IMR-90 (cell line): ENCODE measurements at regions of chr9 and their contacts with region 1.

Region 1: GRCh38 chr9:37953775-37954437 is 50.0 kb upstream of the SLC25A51 start:
- DNase-seq: peak; percentile 100
- ATAC-seq: peak; percentile 74
- H3K4me3 ChIP-seq: no peak overlapping the region
- H3K27ac ChIP-seq: peak overlapping the region; percentile 87
- H3K4me1 ChIP-seq: peaks cover 28% of the 10 kb centered on the region
- H3K27me3 ChIP-seq: no peaks in the 10 kb centered on the region
- CTCF ChIP-seq: no peak
- POLR2A ChIP-seq: peak; percentile 65; the same call in 1 of the 2 replicates
- RAD21 ChIP-seq: 0 out of 2 replicates have a peak, but pooled peaks have one; percentile 16

Region 2: GRCh38 chr9:37994639-37995347 is 40.9 kb after region 1 on chr9:
- CTCF ChIA-PET with region 1: no interaction called
- POLR2A ChIA-PET with region 1: no interaction called
- dilution Hi-C with region 1: no loop called
- in situ Hi-C with region 1: no loop called
- intact Hi-C with region 1: loop called (anchors 1 kb)
- DNase-seq: peak; percentile 88
- ATAC-seq: peak; percentile 68
- H3K4me3 ChIP-seq: peak overlapping the region; percentile 18; the same call in 1 of the 2 replicates
- H3K27ac ChIP-seq: peak overlapping the region; percentile 80
- H3K4me1 ChIP-seq: peaks cover 43% of the 10 kb centered on the region
- H3K27me3 ChIP-seq: no peaks in the 10 kb centered on the region
- CTCF ChIP-seq: no peak
- POLR2A ChIP-seq: no peak
- RAD21 ChIP-seq: peak; percentile 18

Region 3: DNA sequence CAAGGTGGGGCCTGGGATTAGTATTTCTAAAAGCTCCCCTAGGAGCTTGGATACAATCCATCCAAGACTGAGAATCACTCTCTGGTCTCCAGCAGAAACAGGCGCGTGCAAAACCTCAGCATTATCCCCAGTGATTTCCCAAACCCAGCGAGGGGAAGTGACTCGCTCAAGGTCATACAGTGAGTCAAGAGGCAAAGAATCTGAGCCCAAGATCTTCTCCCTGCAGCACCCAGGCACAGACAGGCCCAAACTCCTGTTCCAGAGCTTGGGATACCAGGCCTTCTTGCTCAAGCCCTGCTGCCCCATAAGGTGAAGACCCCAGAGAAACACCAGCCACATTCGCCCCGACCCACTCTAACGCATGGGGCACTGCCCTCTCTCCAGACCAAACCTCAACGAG is 82.0 kb after region 1 on chr9:
- CTCF ChIA-PET with region 1: no interaction called
- POLR2A ChIA-PET with region 1: no interaction called
- dilution Hi-C with region 1: no loop called
- in situ Hi-C with region 1: no loop called
- intact Hi-C with region 1: loop called (anchors 5 kb)
- DNase-seq: peak; percentile 90
- ATAC-seq: peak; percentile 65
- H3K4me3 ChIP-seq: no peak overlapping the region
- H3K27ac ChIP-seq: peak overlapping the region; percentile 85
- H3K4me1 ChIP-seq: peaks cover 53% of the 10 kb centered on the region
- H3K27me3 ChIP-seq: no peaks in the 10 kb centered on the region
- CTCF ChIP-seq: no peak
- POLR2A ChIP-seq: no peak
- RAD21 ChIP-seq: no peak

Region 4: DNA sequence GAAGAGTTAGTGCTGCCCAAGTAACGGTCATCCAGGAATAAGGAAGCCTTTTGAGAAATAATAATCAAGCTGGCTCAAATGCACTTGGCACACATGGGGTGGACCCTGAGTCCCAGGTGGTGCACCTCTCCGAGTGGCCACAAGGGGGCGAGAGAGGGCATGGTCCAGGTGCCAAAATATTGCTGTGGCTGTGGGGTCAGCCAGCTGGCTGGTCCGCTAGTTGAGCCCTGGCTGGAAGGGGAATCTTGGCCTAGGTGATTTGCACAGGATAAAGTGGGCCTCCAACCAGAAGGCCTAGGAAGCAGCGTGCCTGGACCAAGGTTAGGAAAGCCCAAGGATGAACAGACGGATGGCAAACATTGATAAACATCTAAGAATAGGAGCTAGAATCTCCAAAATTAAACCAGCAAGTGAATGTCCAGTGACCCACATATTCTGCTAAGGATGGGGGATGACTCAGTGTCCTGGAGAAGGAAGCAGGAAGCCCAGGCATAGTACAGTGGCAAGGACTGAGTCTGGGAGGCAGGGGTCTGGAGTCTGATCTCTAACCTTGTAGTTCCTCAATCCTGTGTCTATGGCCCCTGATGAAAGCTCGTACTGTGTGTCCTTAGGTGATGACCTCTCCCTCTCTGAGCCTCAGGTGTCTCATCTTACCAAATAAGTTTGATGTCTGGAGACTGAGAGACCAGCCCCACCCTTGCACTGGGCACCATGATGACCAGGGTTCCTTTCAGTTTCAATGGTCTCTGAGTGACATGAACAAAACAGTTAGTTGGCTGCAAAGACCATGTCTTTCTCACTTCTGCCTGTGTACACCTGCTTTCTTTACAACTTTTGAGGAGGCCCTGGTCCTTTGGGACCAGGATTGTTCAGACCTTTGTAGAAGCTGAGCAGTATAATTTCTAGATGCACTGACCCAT is 134.4 kb after region 1 on chr9:
- CTCF ChIA-PET with region 1: no interaction called
- POLR2A ChIA-PET with region 1: no interaction called
- dilution Hi-C with region 1: no loop called
- in situ Hi-C with region 1: no loop called
- intact Hi-C with region 1: no loop called
- DNase-seq: peak; percentile 37
- ATAC-seq: peak; percentile 84
- H3K4me3 ChIP-seq: no peak overlapping the region
- H3K27ac ChIP-seq: no peak overlapping the region
- H3K4me1 ChIP-seq: peaks cover 2% of the 10 kb centered on the region; the same call in 1 of the 2 replicates
- H3K27me3 ChIP-seq: no peaks in the 10 kb centered on the region
- CTCF ChIP-seq: peak; percentile 80
- POLR2A ChIP-seq: no peak
- RAD21 ChIP-seq: peak; percentile 77

Region 5: GRCh38 chr9:38263532-38263931 is 309.6 kb after region 1 on chr9:
- CTCF ChIA-PET with region 1: no interaction called
- POLR2A ChIA-PET with region 1: no interaction called
- dilution Hi-C with region 1: no loop called
- in situ Hi-C with region 1: no loop called
- intact Hi-C with region 1: no loop called
- DNase-seq: peak; percentile 48
- ATAC-seq: no peak
- H3K4me3 ChIP-seq: no peak overlapping the region
- H3K27ac ChIP-seq: no peak overlapping the region
- H3K4me1 ChIP-seq: no peaks in the 10 kb centered on the region
- H3K27me3 ChIP-seq: peaks cover 5% of the 10 kb centered on the region
- CTCF ChIP-seq: peak; percentile 67
- POLR2A ChIP-seq: no peak
- RAD21 ChIP-seq: peak; percentile 80